Ascending aorta (tissue), 2 donors: ENCODE measurements at regions of chr12 and their contacts with region 1.

Region 1: GRCh38 chr12:121917979-121918678 is at the start of gene CFAP251:
- DNase-seq: peak; percentile 95 to 99
- H3K4me3 ChIP-seq: peak within 1 kb of the TSS; percentile 50 to 79
- H3K27ac ChIP-seq: peak within 1 kb of the TSS; percentile 70 to 76
- H3K4me1 ChIP-seq: peaks cover 3 to 20% of the 10 kb centered on the region in 2 donors
- H3K27me3 ChIP-seq: no peaks in the 10 kb centered on the region
- CTCF ChIP-seq: peak; percentile 85 to 94 (median 94)
- total RNA-seq, gene CFAP251: 0.75 TPM

Region 2: DNA sequence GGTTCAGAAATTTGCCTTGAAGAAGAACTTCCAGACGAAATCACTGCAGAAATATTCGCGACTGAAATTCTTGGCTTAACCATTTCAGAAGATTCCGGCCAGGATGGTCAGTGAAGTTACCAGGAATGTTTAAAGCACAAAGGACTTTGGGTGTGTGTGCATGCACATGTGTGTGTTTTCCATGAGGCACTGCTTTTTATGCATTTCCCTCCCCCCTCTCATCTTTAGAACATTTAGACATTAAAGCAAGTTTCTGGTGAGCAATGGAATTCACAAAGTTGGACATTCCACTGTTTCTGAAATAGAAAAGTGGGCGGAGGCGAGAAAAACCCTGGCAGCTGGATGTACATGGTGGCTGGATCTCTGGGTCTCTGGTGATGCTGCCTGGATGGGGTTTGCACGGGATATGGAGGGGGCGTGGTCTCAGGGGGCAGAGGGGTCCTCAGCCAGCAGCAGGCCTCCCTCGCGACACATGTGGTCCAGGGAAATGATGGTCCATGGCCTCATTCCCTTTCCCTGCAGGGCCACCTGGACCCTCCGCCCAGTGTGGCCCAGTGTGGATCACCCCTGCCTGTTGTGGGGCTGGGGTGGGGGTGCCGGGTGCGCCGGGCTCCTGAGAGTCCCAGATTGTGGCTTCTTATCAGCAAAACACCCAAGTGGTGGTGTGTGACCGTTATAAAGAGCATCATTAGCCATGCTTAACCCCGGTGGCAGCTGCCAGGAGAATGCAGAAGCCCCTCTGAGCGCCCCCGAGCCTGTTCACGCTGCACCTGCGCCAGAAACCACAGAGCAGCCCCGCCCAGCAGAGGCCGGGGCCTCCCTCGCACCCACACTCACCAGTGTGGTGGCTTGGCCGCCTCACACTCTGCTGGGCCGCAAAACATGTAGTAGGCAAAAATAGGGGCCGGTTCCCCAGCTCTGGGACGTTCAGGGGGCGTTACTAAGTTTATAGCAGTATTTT is 85.8 kb after region 1 on chr12:
- intact Hi-C with region 1: loop called (anchors 5 kb)
- DNase-seq: no peak
- H3K4me3 ChIP-seq: peak overlapping the region in 1 of 2 donors; percentile 33
- H3K27ac ChIP-seq: peak overlapping the region; percentile 85 to 86
- H3K4me1 ChIP-seq: peaks cover 14 to 20% of the 10 kb centered on the region in 2 donors
- H3K27me3 ChIP-seq: no peaks in the 10 kb centered on the region
- CTCF ChIP-seq: no peak

Region 3: DNA sequence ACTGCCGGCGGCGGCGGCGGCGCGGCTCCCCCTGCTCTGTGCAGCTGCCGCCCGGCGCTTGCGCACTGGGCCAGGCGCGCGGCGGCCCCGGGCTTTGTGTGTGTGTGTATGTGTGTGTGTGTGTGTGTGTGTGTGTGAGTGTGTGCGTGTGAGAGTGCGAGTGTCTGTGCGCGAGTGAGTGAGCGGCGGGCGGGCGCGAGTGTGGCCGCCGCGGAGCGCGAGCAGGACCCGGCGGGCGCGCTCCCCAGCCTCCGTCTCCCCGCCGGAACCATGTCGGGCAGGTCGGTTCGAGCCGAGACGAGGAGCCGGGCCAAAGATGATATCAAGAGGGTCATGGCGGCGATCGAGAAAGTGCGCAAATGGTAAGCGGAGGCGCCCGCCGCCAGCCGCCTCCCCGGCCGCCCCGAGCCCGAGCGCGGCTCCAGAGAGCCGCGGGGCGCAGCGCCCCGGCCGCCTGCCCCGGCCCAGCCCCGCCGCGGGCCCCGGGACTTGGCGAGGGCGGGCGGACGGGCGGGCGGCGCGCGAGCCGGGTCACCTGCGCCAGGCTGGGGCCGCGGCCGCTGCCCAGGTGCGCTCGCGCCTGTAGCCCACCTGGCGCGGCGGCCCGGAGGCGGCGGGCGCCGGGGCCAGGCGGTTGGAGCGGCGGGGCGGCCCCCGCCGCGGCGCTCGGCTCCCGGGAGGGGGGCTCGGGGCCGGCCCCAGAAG is 103.8 kb after region 1 on chr12 and contains the start of gene BCL7A:
- intact Hi-C with region 1: loop called (anchors 1 kb)
- DNase-seq: peak; percentile 22 to 82
- H3K4me3 ChIP-seq: peak within 1 kb of the TSS; percentile 95 to 97
- H3K27ac ChIP-seq: peak within 1 kb of the TSS; percentile 87 to 93
- H3K4me1 ChIP-seq: peaks cover 4 to 16% of the 10 kb centered on the region in 2 donors
- H3K27me3 ChIP-seq: no peaks in the 10 kb centered on the region
- CTCF ChIP-seq: no peak
- total RNA-seq, gene BCL7A: 3.2 TPM

Region 4: GRCh38 chr12:122051231-122051876 is 133.2 kb after region 1 on chr12:
- intact Hi-C with region 1: loop called (anchors 1 kb)
- DNase-seq: no peak
- H3K4me3 ChIP-seq: no peak overlapping the region
- H3K27ac ChIP-seq: peak overlapping the region; percentile 70 to 78
- H3K4me1 ChIP-seq: peaks cover 0 to 5% of the 10 kb centered on the region in 2 donors
- H3K27me3 ChIP-seq: no peaks in the 10 kb centered on the region
- CTCF ChIP-seq: no peak

Region 5: DNA sequence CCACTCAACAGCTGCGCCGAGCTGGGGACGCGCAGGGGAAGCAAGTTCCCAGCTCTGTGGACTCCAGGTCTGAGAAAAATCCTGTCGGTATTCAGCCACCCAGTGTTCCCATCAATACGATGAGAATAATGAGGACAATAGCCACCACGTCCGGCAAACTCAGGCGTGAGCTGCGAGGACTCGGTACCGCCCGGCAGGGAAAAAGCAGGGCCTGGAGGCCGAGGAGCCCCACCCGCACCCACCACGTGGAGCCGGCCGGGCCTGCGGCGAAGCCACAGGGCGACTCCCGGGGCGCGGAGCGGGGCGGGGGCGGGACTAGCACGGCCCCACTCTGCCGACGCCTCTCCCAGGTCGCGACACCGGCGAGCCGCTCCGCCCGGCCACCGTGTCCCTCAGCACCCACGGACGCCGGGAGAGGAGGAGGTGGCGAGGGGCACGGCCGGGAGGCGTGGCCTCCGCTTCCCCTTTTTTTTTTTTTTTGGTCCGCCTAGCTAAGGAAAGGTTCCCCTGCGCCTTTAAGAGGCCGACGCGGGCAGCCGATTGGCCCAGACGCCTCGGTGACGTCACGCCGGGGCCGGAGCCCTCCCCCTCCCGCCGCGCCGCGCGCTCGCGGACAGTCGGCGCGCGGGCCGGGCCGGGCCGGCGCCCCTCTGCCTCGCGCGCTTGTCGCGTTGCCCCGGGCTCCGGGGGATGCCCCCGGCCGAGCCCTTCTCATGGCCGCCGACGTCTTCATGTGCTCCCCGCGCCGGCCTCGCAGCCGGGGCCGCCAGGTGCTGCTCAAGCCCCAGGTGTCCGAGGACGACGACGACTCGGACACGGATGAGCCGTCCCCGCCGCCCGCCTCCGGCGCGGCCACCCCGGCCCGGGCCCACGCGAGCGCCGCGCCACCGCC is 160.3 kb after region 1 on chr12 and contains the start of gene MLXIP:
- intact Hi-C with region 1: no loop called
- DNase-seq: peak; percentile 72 to 96
- H3K4me3 ChIP-seq: peak within 1 kb of the TSS; percentile 80 to 85
- H3K27ac ChIP-seq: peak within 1 kb of the TSS; percentile 75 to 79
- H3K4me1 ChIP-seq: peaks cover 10 to 26% of the 10 kb centered on the region in 2 donors
- H3K27me3 ChIP-seq: no peaks in the 10 kb centered on the region
- CTCF ChIP-seq: no peak
- total RNA-seq, gene MLXIP: 62.3 TPM

Region 6: DNA sequence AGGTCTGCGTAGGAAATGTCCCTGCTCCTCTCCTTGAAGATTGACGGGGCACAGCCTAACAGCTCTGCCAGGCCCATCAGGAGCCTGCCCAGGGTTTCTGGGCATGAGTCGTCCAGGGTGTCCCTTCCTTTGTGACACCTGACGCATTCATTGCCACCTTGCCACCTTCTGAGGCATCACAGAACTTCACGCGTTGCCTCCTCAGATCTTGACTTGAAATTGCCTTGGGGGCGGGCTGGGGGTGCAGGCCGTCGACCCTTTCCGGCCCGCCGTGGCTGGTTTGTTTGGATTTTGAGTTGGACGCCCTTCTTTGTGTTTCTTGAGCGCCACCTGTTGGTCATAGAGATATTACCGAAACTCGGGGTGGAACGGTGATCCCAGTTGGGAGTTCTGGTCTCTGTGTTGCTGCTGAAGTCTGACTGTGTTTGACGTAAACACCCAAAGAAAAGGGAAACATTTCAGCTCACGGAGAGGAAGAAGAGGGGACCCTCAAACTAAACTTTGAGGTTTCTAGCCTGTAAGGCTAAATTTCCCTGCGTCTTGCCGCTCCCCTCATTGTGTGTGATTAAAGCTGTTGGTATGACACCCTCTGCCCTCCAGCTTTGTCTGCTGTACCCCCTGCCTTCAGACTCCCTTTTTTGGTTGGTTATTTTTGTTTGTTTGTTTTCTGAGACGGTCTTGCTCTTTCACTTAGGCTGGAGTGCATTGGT is 205.1 kb after region 1 on chr12:
- intact Hi-C with region 1: loop called (anchors 1 kb)
- DNase-seq: peak in 1 of 2 donors; percentile 84
- H3K4me3 ChIP-seq: no peak overlapping the region
- H3K27ac ChIP-seq: no peak overlapping the region
- H3K4me1 ChIP-seq: peaks cover 0 to 20% of the 10 kb centered on the region in 2 donors
- H3K27me3 ChIP-seq: no peaks in the 10 kb centered on the region
- CTCF ChIP-seq: peak; percentile 69 to 85 (median 78)

Region 7: GRCh38 chr12:122382919-122383350 is 464.8 kb after region 1 on chr12:
- intact Hi-C with region 1: no loop called
- DNase-seq: no peak
- H3K4me3 ChIP-seq: no peak overlapping the region
- H3K27ac ChIP-seq: peak overlapping the region in 1 of 2 donors; percentile 15
- H3K4me1 ChIP-seq: peaks cover 0 to 9% of the 10 kb centered on the region in 2 donors
- H3K27me3 ChIP-seq: no peaks in the 10 kb centered on the region
- CTCF ChIP-seq: no peak